ENCODE measurements at regions of chr4 and their contacts with region 1.

Region 1: GRCh38 chr4:136864580-136865185 is 667.6 kb downstream of the PCDH18 start:
- DNase-seq: peak; percentile 23
- CTCF ChIP-seq: peak; percentile 86

Region 2: GRCh38 chr4:135371137-135371536 is 1493.5 kb before region 1 on chr4:
- CTCF ChIA-PET with region 1: interaction called, 12 read pairs
- POLR2A ChIA-PET with region 1: no interaction called
- DNase-seq: no peak
- CTCF ChIP-seq: peak; percentile 38

Region 3: DNA sequence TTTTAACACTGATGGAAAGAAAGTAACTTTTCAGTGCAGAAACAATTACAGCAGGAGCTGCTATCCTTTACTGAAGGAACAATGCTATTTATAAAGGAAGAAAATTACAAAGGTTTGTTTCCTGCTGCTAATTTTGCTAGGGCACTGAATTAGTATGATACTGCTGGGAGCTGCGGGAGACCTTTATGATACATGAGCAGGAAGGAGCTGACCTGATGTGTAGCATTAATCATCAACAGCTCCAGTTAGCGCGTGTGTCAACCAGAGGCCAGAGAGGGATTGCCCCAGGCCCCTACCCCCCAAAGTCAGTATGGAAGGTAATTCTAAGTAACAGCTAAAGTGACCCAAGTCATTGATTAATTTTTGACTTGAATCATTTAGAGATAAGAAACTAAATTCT is 61.3 kb before region 1 on chr4:
- CTCF ChIA-PET with region 1: no interaction called
- POLR2A ChIA-PET with region 1: no interaction called
- DNase-seq: no peak
- CTCF ChIP-seq: no peak

Region 4: GRCh38 chr4:136909626-136910025 is 44.9 kb after region 1 on chr4:
- CTCF ChIA-PET with region 1: no interaction called
- POLR2A ChIA-PET with region 1: no interaction called
- DNase-seq: no peak
- CTCF ChIP-seq: no peak

Measured in GM10248 (cell line).